Left cardiac atrium (tissue), 4 donors: ENCODE measurements at regions of chr19 and their contacts with region 1.

Region 1: GRCh38 chr19:19489804-19490655 is 25.3 kb downstream of the TSSK6 start:
- DNase-seq: peak; percentile 75
- ATAC-seq: peak; percentile 53 to 54

Region 2: GRCh38 chr19:19366612-19367396 is 123.2 kb before region 1 on chr19:
- intact Hi-C with region 1: loop called (anchors 2 to 5 kb)
- DNase-seq: peak; percentile 64
- ATAC-seq: peak; percentile 81 to 82